WTC11 (cell line): ENCODE measurements at regions of chr16 and their contacts with region 1.

Region 1: DNA sequence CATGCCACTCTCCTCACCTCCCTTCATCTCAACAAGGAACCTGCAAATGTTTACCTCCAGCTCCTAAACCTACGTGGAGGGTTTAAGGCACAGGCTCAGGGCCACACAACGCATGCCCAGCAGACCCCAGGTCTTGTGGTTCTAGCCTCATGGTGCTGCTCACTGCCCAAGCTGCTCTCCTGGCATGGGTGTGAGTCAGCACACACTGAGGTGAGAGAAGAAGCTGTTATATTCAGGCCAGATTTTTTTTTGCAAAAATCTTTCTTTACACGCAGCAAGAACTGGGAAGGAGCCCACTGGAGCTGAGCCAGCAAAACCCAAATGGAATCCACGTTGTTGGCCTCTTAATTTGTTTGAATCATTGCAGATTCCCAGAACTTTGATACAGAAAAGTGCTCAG is 5.5 kb upstream of the C16orf96 start:
- DNase-seq: no peak
- ATAC-seq: no peak
- H3K4me3 Mint-ChIP-seq: no peak overlapping the region
- H3K27ac Mint-ChIP-seq: peak overlapping the region; percentile 92; the same call in 1 of the 2 replicates
- H3K4me1 Mint-ChIP-seq: no peaks in the 10 kb centered on the region
- H3K27me3 Mint-ChIP-seq: peaks cover 10% of the 10 kb centered on the region; the same call in 1 of the 2 replicates
- CTCF ChIP-seq: no peak

Region 2: DNA sequence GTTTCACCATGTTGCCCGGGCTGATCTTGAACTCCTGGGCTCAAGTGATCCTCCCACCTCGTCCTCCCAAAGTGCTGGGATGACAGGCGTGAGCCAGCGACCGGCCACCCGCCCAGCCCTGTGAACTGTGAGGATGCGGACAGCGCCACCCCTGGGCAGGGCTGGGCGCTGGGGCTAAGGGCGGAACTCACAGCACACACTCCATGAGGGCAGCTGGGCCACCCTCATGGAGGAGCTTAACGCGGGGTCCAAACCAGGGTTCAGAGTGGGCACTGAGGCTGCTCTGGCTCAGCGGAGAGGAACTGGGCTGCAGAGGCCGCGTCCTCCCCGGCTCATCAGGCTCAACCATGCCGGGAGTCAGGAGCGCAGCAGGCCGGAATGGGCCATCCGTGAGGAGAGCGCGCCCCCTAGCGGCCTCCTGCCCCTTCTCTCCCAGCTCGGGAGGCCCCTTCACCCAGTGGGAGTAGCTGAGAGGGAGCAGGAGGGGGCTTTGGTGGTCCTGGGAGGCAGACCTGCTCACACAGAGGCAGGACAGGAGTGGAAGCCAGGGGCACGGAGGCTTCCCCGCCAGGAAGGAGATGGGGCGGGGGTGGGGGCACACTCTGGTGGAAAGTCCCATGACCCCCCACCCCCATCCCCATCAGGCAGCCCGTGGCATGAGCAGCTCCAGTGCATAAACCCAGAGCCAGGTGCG is 148.0 kb before region 1 on chr16:
- CTCF ChIA-PET with region 1: no interaction called
- POLR2A ChIA-PET with region 1: no interaction called
- DNase-seq: peak; percentile 94
- ATAC-seq: peak; percentile 77
- H3K4me3 Mint-ChIP-seq: peak overlapping the region; percentile 30
- H3K27ac Mint-ChIP-seq: no peak overlapping the region
- H3K4me1 Mint-ChIP-seq: peaks cover 6% of the 10 kb centered on the region
- H3K27me3 Mint-ChIP-seq: no peaks in the 10 kb centered on the region
- CTCF ChIP-seq: peak; percentile 97

Region 3: DNA sequence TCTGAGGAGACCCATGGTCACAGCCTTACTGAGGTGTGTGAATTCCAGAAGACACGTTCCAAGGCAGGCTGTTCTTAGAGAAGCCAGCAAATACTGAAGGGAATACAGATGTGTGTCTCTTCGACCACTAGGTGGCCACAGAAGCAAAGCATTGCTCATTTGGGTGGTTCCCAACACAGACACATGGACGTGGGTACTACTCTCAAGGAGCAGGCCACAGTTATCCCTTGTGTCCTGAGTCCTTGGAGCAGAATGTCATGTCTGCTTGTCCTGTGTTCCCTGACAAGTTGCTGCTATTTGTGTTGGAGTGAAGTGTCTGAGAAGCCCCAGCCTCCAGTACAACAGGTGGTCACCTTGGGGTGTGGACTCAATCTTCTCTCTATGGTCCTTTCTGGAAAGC is 44.1 kb before region 1 on chr16:
- CTCF ChIA-PET with region 1: interaction called, 23 read pairs
- POLR2A ChIA-PET with region 1: no interaction called
- DNase-seq: peak; percentile 51
- ATAC-seq: peak; percentile 88
- H3K4me3 Mint-ChIP-seq: no peak overlapping the region
- H3K27ac Mint-ChIP-seq: peak overlapping the region; percentile 13
- H3K4me1 Mint-ChIP-seq: peaks cover 6% of the 10 kb centered on the region; the same call in 1 of the 2 replicates
- H3K27me3 Mint-ChIP-seq: no peaks in the 10 kb centered on the region; the same call in 1 of the 2 replicates
- CTCF ChIP-seq: peak; percentile 88

Region 4: DNA sequence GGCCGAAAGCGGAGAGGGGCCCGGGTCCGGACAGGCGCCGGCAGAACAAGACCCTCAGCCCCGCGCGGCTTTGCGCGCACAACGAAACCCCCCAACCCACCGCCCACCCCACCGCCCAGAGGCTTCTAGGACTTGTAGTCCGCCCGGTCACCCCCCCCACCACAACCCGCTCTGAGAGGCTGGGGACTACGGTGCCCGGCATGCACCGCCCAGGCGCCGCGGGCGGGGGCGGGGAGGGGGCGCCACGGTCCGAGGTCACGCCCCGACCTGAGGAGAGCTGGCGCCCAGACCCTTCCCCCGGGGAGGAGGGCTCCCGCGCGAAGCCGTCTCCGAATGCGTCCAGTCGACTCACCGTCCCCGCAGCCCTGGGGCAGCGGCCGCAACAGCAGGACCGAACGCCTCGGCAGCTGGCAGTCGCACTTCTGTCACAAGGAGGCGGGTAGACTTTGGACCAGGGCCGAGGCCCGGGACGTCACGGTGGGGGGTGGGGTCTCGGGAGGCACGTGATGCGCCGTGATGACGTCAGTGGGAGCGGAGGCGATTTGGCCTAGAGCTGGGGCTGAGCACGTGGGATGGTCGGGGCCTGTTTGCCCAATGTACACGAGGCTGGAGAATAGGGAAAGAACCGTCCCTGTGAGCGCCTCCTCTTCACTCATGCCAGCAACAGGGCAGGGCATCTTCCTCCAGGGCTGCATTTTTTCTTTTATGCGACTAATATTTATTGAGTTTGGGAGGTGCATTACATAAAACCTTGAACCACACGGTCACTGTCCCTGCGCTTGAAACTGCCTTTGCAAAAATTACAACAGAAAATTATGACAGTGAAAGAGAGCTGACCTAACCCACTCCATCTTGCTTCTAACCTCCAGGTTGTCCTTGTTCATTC is 12.0 kb before region 1 on chr16 and contains the start of gene CDIP1:
- CTCF ChIA-PET with region 1: interaction called, 23 read pairs
- POLR2A ChIA-PET with region 1: interaction called, 15 read pairs
- DNase-seq: peak; percentile 95
- ATAC-seq: peak; percentile 90
- H3K4me3 Mint-ChIP-seq: peak within 1 kb of the TSS; percentile 80
- H3K27ac Mint-ChIP-seq: 0 out of 2 replicates have a peak within 1 kb of the TSS, but pooled peaks have one; percentile 65
- H3K4me1 Mint-ChIP-seq: peaks cover 30% of the 10 kb centered on the region
- H3K27me3 Mint-ChIP-seq: peaks cover 32% of the 10 kb centered on the region
- CTCF ChIP-seq: no peak
- total RNA-seq, gene CDIP1: 68.9 to 79.2 TPM (median 78.9 TPM) in 3 replicates

Region 5: GRCh38 chr16:4574919-4575705 is 24.5 kb after region 1 on chr16:
- CTCF ChIA-PET with region 1: interaction called, 14 read pairs
- POLR2A ChIA-PET with region 1: interaction called, 3 read pairs
- DNase-seq: peak; percentile 66
- ATAC-seq: peak; percentile 71
- H3K4me3 Mint-ChIP-seq: no peak overlapping the region
- H3K27ac Mint-ChIP-seq: no peak overlapping the region
- H3K4me1 Mint-ChIP-seq: peaks cover 18% of the 10 kb centered on the region
- H3K27me3 Mint-ChIP-seq: peaks cover 5% of the 10 kb centered on the region
- CTCF ChIP-seq: no peak

Region 6: DNA sequence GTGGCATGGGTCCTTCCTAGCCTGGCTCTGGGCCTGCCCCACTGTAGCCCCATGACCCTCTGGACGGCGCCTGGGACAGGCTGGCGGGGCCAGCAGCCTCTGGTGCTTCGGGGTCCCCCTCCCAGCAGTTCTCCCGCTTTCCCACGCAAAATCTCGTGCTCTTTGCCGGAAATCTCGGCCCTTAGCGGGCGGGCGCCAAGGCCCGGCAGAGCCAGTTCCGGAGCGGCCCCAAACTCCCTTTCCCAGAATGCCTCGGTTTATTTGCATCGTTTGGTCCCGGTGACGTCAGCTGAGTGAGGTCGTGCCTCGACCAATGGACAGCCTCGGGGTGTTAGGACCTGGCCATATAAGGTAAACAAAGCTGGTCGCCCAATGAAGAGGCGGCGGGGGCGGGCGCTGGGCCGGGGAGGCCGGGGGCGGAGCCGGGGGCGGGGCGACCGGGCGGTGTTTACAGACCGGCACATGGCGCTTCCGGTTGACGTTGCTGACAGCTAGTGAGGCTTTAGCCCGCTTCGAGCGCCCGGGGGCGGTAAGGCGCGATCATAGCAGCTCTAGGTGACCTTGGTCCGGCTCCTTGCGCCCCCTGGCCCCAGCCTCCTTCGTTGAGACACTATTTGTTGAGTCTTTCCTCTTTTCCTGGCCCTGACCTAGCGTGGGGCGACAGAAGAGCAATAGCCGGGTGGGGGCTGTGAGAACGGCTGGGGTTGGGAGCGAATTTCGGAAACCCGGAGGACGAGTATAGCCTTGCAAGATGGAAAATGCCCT is 65.6 kb after region 1 on chr16:
- CTCF ChIA-PET with region 1: interaction called, 13 read pairs
- POLR2A ChIA-PET with region 1: interaction called, 4 read pairs
- DNase-seq: peak; percentile 99
- ATAC-seq: peak; percentile 81
- H3K4me3 Mint-ChIP-seq: peak overlapping the region; percentile 87
- H3K27ac Mint-ChIP-seq: peak overlapping the region; percentile 100
- H3K4me1 Mint-ChIP-seq: peaks cover 38% of the 10 kb centered on the region
- H3K27me3 Mint-ChIP-seq: no peaks in the 10 kb centered on the region
- CTCF ChIP-seq: no peak

Region 7: DNA sequence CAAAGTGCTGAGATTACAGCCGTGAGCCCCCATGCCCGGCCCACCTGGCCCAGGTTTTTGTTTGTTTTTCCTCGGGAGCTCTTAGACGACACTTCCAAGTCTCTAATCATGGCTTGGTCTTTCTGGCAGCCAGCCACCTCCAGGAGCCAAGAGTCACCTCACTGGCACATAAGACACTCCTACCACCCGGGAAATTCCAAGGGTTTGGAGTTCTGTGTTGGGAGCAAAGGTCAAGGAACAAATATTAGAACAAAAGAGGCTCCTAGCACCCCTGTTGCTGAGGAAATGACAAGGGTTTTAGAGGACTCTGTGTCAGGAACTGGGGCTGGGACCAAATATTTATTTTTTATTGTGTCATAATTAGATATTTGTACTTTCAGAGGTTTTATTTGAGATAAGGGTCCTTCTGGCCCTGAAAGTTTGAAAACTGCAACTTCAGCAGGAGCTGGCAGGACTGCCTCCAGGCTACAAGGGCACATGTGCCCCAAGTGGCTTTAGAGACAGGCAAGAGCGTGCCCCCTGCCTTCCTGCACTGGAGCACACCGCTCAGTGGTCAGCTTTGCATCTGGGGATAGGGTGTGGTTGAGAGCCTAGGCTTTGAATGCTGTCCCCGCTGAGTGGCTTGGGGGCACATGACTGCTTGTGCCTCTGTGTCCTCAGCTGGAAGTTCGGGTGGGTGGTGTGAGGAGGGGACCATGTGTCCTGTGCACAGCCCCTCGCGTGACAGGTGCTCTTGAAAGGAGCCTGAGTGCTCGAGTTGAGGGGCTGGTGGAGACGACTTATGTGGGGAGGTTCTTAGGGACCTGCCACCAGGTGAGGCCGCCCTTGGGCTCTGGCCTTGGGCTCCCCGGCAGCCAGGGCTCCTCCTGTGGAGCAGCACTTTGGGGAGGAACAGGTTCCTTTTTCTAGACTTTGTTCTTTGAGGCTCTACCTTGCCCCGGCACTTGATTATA is 103.7 kb after region 1 on chr16:
- CTCF ChIA-PET with region 1: no interaction called
- POLR2A ChIA-PET with region 1: no interaction called
- DNase-seq: no peak
- ATAC-seq: no peak
- H3K4me3 Mint-ChIP-seq: no peak overlapping the region
- H3K27ac Mint-ChIP-seq: 0 out of 2 replicates have a peak overlapping the region, but pooled peaks have one; percentile 23
- H3K4me1 Mint-ChIP-seq: no peaks in the 10 kb centered on the region
- H3K27me3 Mint-ChIP-seq: no peaks in the 10 kb centered on the region
- CTCF ChIP-seq: no peak